HCT116 (cell line): ENCODE measurements at regions of chr11 and their contacts with region 1.

Region 1: GRCh38 chr11:116879800-116880625 is 42.6 kb upstream of the APOA1 start:
- DNase-seq: peak; percentile 51
- ATAC-seq: peak; percentile 95
- H3K4me3 ChIP-seq: no peak overlapping the region
- H3K27ac ChIP-seq: no peak overlapping the region
- H3K4me1 ChIP-seq: peaks cover 0 to 5% of the 10 kb centered on the region in 2 experiments; a peak in 1 of 4 replicates
- H3K27me3 ChIP-seq: no peaks in the 10 kb centered on the region
- CTCF ChIP-seq: peak; percentile 74 to 77 (median 75); a peak in 5 of 6 replicates
- POLR2A ChIP-seq: no peak
- RAD21 ChIP-seq: peak; percentile 86

Region 2: DNA sequence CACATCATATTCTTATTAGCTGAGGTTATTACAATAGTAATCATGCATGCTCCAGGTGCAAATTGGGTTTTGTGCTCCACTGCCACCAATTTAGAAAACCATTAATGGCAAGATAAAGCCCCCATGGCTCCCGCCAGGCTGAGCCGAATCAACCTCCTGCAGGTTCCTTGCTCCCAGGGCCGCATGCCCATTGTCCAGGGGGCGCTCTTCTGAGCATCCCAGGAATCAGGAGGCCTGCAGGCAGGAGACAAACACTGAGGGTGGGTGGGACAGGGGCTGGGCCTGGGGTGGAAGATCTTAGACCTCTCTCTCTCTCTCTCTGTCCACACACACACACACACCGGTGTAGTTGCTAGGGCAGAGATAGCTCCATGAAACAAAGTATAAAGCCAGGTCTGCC is 164.6 kb before region 1 on chr11:
- CTCF ChIA-PET with region 1: no interaction called
- POLR2A ChIA-PET with region 1: no interaction called
- RAD21 ChIA-PET with region 1: no interaction called
- intact Hi-C with region 1: no loop called
- DNase-seq: no peak
- ATAC-seq: peak; percentile 65
- H3K4me3 ChIP-seq: no peak overlapping the region
- H3K27ac ChIP-seq: no peak overlapping the region
- H3K4me1 ChIP-seq: no peaks in the 10 kb centered on the region
- H3K27me3 ChIP-seq: no peaks in the 10 kb centered on the region
- CTCF ChIP-seq: peak in 1 of 3 experiments; percentile 30; a peak in 2 of 6 replicates
- POLR2A ChIP-seq: no peak
- RAD21 ChIP-seq: no peak

Region 3: DNA sequence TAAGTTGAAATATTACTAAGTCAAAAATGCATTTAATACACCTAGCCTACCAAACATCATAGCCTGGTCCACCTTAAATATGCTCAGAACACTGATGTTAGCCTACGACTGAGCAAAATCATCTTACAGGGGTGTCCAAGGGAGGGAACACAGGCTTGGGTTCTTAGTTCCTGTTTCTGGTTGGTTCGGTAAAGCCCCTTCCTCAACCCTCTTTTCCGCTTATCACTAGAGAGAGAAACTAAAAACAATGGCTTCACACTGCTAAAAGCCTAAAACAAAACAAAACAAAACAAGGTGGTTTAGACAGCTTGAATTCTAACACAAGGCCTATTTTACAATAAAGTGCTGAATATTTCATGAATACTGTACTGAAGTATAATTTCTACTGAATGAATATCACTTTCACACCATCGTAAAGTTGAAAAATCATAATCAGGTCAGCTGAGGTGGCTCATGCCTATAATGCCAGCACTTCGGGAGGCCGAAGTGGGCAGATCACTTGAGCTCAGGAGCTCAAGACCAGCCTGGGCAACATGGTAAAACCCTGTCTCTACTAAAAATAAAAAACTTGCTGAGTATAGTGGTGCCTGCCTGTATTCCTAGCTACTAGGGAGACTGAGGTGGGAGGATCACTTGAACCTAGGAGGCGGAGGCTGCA is 100.3 kb after region 1 on chr11:
- CTCF ChIA-PET with region 1: no interaction called
- POLR2A ChIA-PET with region 1: no interaction called
- RAD21 ChIA-PET with region 1: no interaction called
- intact Hi-C with region 1: no loop called
- DNase-seq: no peak
- ATAC-seq: no peak
- H3K4me3 ChIP-seq: no peak overlapping the region
- H3K27ac ChIP-seq: no peak overlapping the region
- H3K4me1 ChIP-seq: peaks cover 0 to 7% of the 10 kb centered on the region in 2 experiments; a peak in 2 of 4 replicates
- H3K27me3 ChIP-seq: no peaks in the 10 kb centered on the region
- CTCF ChIP-seq: no peak
- POLR2A ChIP-seq: no peak
- RAD21 ChIP-seq: no peak

Region 4: GRCh38 chr11:117097389-117098268 is 217.6 kb after region 1 on chr11:
- CTCF ChIA-PET with region 1: interaction called, 3 read pairs
- POLR2A ChIA-PET with region 1: no interaction called
- RAD21 ChIA-PET with region 1: no interaction called
- intact Hi-C with region 1: loop called (anchors 2 kb)
- DNase-seq: no peak
- ATAC-seq: peak; percentile 54
- H3K4me3 ChIP-seq: peak overlapping the region; percentile 79 to 83
- H3K27ac ChIP-seq: peak overlapping the region; percentile 72
- H3K4me1 ChIP-seq: peaks cover 23 to 31% of the 10 kb centered on the region in 2 experiments
- H3K27me3 ChIP-seq: no peaks in the 10 kb centered on the region
- CTCF ChIP-seq: no peak
- POLR2A ChIP-seq: no peak
- RAD21 ChIP-seq: no peak